ENCODE measurements at regions of chr6 and their contacts with region 1.

Region 1: DNA sequence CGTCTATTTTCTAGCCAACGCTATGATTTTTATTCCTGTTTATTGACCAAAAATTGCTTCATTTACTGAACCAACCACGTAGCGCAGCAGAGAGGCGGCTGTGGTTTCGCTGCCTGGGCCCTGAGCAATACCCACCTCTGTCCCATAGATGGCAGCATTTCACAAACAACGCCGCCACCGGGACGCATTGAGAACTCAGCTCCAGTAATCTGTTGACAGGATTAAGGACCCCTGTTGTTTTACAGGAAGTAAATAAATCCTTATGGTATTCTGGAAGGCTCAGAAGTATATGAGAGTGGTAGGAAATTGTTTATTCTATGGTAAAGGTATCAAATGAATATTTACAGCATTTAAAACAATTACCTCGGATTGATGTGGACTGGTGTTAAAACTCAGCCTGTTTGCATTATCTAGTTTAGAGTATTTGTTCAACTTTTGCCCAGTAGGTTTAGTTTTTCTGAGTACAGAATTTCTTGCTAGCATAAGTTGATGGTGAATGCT is 547.9 kb upstream of the SLC35B3 start:
- DNase-seq: peak; percentile 74
- H3K4me3 Mint-ChIP-seq: no peak overlapping the region
- H3K27ac Mint-ChIP-seq: no peak overlapping the region
- H3K4me1 Mint-ChIP-seq: no peaks in the 10 kb centered on the region
- H3K27me3 Mint-ChIP-seq: no peaks in the 10 kb centered on the region
- CTCF ChIP-seq: peak; percentile 95

Region 2: GRCh38 chr6:8539446-8539845 is 443.8 kb before region 1 on chr6:
- CTCF ChIA-PET with region 1: interaction called, 4 read pairs
- POLR2A ChIA-PET with region 1: no interaction called
- intact Hi-C with region 1: loop called (anchors 2 kb)
- DNase-seq: peak; percentile 55
- H3K4me3 Mint-ChIP-seq: no peak overlapping the region
- H3K27ac Mint-ChIP-seq: peak overlapping the region; percentile 13
- H3K4me1 Mint-ChIP-seq: peaks cover 9% of the 10 kb centered on the region
- H3K27me3 Mint-ChIP-seq: no peaks in the 10 kb centered on the region
- CTCF ChIP-seq: peak; percentile 54

Region 3: DNA sequence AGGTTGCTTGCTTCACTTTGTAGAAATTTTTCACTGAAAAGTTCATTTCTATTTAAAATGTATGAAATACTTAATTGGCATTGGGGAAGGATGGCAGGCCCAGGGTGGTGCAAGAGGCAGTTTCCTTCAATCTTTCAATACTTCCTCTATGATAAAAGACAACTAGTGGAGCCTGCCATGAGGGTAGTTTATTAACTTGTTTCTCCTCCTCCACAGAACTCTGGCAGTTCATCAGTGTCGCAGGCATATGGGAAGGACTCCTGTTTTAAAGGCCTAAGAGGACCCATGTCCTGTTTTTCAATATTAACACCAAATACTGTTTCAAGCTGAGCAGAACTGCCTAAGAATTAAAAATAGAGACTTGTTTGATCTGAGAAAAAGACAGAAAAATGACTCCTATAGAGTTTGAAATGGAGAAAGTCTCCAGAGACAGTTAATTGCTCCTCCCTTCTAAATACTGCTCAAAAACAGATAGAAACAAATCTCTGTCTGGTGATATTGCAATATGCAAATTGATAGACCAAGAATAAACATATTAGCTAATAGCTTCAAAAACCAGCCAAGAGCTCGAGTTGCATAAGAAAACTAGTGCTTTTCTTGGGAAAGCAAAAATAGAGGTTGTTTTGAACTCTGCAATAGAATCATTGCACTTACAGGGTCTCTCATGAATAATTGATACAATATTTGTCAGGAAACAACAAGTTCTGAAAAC is 117.8 kb after region 1 on chr6:
- CTCF ChIA-PET with region 1: no interaction called
- POLR2A ChIA-PET with region 1: no interaction called
- intact Hi-C with region 1: no loop called
- DNase-seq: no peak
- H3K4me3 Mint-ChIP-seq: no peak overlapping the region
- H3K27ac Mint-ChIP-seq: no peak overlapping the region
- H3K4me1 Mint-ChIP-seq: no peaks in the 10 kb centered on the region
- H3K27me3 Mint-ChIP-seq: no peaks in the 10 kb centered on the region
- CTCF ChIP-seq: no peak

Region 4: DNA sequence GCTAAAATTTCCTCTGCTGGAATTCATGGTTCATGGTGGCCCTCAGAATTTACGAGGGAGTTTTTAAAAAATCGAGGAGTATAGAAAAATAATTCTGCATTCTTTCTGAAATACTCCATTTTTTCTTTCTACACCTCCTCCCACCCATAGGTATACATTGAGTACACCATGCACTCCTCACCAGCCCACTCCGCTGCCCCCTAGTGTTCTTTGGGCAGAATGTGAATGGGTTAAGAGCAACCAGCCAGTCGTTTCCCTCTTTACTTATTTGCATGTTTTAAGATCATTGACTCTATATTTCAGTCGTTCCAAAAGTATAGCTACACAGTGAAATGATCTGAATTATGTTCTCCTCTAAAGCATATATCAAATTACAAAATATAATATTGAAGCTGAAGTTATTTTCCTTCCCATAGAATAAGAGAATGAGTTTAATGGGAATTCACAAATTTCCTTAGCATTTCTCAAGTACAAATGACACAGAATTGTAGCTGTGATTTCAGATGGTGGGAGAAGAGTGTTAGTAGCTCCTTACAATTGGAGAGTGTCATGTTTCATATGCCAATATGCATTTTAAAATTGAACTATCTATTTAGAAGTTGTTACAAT is 429.8 kb after region 1 on chr6:
- CTCF ChIA-PET with region 1: interaction called, 4 read pairs
- POLR2A ChIA-PET with region 1: no interaction called
- intact Hi-C with region 1: loop called (anchors 2 kb)
- DNase-seq: peak; percentile 69
- H3K4me3 Mint-ChIP-seq: no peak overlapping the region
- H3K27ac Mint-ChIP-seq: no peak overlapping the region
- H3K4me1 Mint-ChIP-seq: no peaks in the 10 kb centered on the region
- H3K27me3 Mint-ChIP-seq: no peaks in the 10 kb centered on the region
- CTCF ChIP-seq: peak; percentile 36

Region 5: GRCh38 chr6:9610620-9611415 is 627.6 kb after region 1 on chr6:
- CTCF ChIA-PET with region 1: no interaction called
- POLR2A ChIA-PET with region 1: no interaction called
- intact Hi-C with region 1: loop called (anchors 1 kb)
- DNase-seq: no peak
- H3K4me3 Mint-ChIP-seq: no peak overlapping the region
- H3K27ac Mint-ChIP-seq: no peak overlapping the region
- H3K4me1 Mint-ChIP-seq: peaks cover 6% of the 10 kb centered on the region
- H3K27me3 Mint-ChIP-seq: no peaks in the 10 kb centered on the region
- CTCF ChIP-seq: no peak

Region 6: GRCh38 chr6:10082385-10082784 is 1099.1 kb after region 1 on chr6:
- CTCF ChIA-PET with region 1: no interaction called
- POLR2A ChIA-PET with region 1: no interaction called
- intact Hi-C with region 1: loop called (anchors 5 kb)
- DNase-seq: peak; percentile 71
- H3K4me3 Mint-ChIP-seq: no peak overlapping the region
- H3K27ac Mint-ChIP-seq: peak overlapping the region; percentile 33
- H3K4me1 Mint-ChIP-seq: peaks cover 49% of the 10 kb centered on the region
- H3K27me3 Mint-ChIP-seq: no peaks in the 10 kb centered on the region
- CTCF ChIP-seq: no peak